ENCODE measurements at regions of chr7 and their contacts with region 1.

Region 1: GRCh38 chr7:97835296-97836138 is 36.7 kb downstream of the ASNS start:
- DNase-seq: peak; percentile 35 to 48 (median 39)
- H3K4me3 ChIP-seq: no peak overlapping the region
- H3K4me3 Mint-ChIP-seq: peak overlapping the region in 1 of 8 donors; percentile 29
- H3K27ac ChIP-seq: no peak overlapping the region
- H3K27ac Mint-ChIP-seq: no peak overlapping the region
- H3K4me1 ChIP-seq: no peaks in the 10 kb centered on the region
- H3K4me1 Mint-ChIP-seq: peaks cover 0 to 2% (median 1%) of the 10 kb centered on the region in 4 donors
- H3K27me3 ChIP-seq: peaks cover 4% of the 10 kb centered on the region
- H3K27me3 Mint-ChIP-seq: peaks cover 26 to 38% of the 10 kb centered on the region in 2 donors

Region 2: DNA sequence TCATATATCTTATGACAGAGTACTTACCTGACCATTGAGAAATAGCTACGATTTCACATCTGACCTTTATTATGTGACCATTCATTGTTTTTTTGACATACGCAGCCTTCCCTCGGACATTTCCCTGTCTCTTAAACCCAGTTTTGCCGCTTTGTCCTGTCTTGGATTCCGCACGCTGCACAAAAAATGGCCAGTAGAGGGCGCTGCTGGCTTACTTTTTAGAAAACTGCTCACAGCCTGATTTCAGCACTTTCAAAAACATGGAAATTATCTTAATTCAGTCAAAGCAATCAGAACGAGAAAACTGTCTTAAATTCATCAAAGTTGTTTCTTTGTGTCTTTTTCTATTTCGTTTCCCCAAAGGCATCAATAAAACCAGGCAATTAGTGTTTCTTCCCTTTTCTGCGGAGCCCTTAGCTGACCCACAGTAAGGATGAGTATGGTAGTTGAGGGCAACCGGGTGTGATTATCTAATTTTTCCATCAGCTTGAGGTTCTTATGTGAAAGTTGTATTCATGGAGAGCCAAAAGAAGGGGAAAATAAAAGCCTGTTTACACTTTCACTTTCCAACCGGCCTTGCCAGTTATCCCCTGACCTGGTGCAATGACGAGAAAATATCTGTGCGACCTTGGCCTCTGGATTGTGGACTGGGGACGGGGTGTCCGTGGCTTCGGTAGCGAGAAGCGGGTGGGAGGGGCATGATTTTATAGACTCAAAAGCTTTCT is 1918.8 kb before region 1 on chr7:
- CTCF ChIA-PET with region 1: interaction called, 32 read pairs
- POLR2A ChIA-PET with region 1: no interaction called
- intact Hi-C with region 1: no loop called
- DNase-seq: peak; percentile 45 to 60 (median 51)
- H3K4me3 ChIP-seq: no peak overlapping the region
- H3K4me3 Mint-ChIP-seq: peak overlapping the region in 1 of 8 donors; percentile 34
- H3K27ac ChIP-seq: no peak overlapping the region
- H3K27ac Mint-ChIP-seq: no peak overlapping the region
- H3K4me1 ChIP-seq: no peaks in the 10 kb centered on the region
- H3K4me1 Mint-ChIP-seq: peaks cover 0 to 4% (median 2%) of the 10 kb centered on the region in 4 donors
- H3K27me3 ChIP-seq: no peaks in the 10 kb centered on the region
- H3K27me3 Mint-ChIP-seq: peaks cover 8 to 15% of the 10 kb centered on the region in 2 donors

Region 3: GRCh38 chr7:97104719-97105238 is 730.7 kb before region 1 on chr7:
- CTCF ChIA-PET with region 1: interaction called, 13 read pairs
- POLR2A ChIA-PET with region 1: no interaction called
- intact Hi-C with region 1: no loop called
- DNase-seq: peak; percentile 27 to 59 (median 50)
- H3K4me3 ChIP-seq: no peak overlapping the region
- H3K4me3 Mint-ChIP-seq: no peak overlapping the region
- H3K27ac ChIP-seq: no peak overlapping the region
- H3K27ac Mint-ChIP-seq: no peak overlapping the region
- H3K4me1 ChIP-seq: no peaks in the 10 kb centered on the region
- H3K4me1 Mint-ChIP-seq: no peaks in the 10 kb centered on the region
- H3K27me3 ChIP-seq: no peaks in the 10 kb centered on the region
- H3K27me3 Mint-ChIP-seq: peaks cover 15 to 22% of the 10 kb centered on the region in 2 donors

Region 4: GRCh38 chr7:97179454-97180104 is 655.9 kb before region 1 on chr7:
- CTCF ChIA-PET with region 1: interaction called, 3 read pairs
- POLR2A ChIA-PET with region 1: no interaction called
- intact Hi-C with region 1: loop called (anchors 10 kb)
- DNase-seq: peak; percentile 37 to 49 (median 44)
- H3K4me3 ChIP-seq: no peak overlapping the region
- H3K4me3 Mint-ChIP-seq: no peak overlapping the region
- H3K27ac ChIP-seq: no peak overlapping the region
- H3K27ac Mint-ChIP-seq: peak overlapping the region in 1 of 7 donors; percentile 59
- H3K4me1 ChIP-seq: no peaks in the 10 kb centered on the region
- H3K4me1 Mint-ChIP-seq: peaks cover 0 to 3% (median 0%) of the 10 kb centered on the region in 4 donors
- H3K27me3 ChIP-seq: no peaks in the 10 kb centered on the region
- H3K27me3 Mint-ChIP-seq: no peaks in the 10 kb centered on the region

Region 5: DNA sequence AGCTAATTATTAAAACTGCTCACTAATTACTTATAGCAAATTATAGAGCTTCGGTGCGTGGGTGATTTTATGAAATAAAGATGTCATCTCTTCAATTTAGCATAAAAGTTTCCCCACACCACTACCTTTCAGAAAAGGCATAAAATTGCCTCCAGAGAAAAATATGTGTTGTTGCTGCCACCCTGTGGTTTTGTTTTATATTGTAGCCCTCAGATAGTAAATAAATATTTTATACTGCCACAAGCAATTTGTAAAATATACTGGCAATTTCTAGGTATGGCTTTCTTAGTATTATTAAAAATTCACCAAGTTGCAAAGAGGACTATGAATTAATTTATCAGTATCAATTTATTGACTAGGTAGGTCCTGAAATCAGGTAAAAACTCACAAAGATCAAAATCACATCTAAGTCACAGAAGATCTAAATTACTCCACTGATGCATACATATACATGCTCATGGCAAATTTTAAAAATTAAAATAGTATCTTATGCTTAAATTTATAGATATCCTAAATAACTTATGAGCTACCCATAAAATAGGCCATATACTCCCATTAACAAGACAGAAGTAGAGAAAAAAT is 10.2 kb after region 1 on chr7:
- CTCF ChIA-PET with region 1: interaction called, 32 read pairs
- POLR2A ChIA-PET with region 1: no interaction called
- intact Hi-C with region 1: no loop called
- DNase-seq: peak in 2 of 5 donors; percentile 4 to 10
- H3K4me3 ChIP-seq: no peak overlapping the region
- H3K4me3 Mint-ChIP-seq: no peak overlapping the region
- H3K27ac ChIP-seq: no peak overlapping the region
- H3K27ac Mint-ChIP-seq: no peak overlapping the region
- H3K4me1 ChIP-seq: no peaks in the 10 kb centered on the region
- H3K4me1 Mint-ChIP-seq: no peaks in the 10 kb centered on the region
- H3K27me3 ChIP-seq: no peaks in the 10 kb centered on the region
- H3K27me3 Mint-ChIP-seq: peaks cover 3 to 4% of the 10 kb centered on the region in 2 donors